H1 (cell line): ENCODE measurements at regions of chr6 and their contacts with region 1.

Region 1: DNA sequence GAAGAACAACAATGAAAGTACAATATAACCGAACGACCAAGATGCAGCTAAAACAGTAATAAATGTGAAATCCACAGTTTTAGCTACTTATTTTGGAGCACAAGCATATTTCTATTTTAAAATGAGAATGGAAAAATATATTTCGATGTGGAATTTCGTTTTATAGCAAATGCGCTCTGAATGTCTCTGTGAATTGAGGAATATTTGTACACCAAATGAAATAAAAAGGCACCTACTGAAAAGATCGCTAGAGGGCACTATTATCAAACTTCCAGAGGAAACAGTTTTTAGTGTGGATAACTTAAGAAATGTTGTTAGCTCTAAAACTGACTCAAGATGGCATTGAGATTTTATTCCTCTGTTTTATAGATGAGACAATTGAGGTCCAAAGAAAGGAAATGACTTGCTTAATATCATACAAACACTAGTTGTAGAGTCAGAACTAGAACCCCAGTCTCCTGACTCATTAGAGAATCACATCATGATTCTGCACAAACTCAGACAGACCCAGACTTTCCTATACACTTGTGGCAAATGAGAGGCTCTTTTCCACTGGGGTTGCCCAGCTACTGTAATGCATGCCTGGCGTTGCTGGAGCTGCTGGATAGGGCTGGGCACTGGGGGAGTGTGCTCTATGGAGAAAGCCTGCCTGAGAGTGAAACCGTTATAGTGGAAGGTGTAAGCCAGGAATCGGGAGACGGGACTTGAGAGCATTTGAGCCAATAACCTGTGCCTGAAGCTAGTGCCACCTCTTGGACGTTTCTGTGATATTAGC is 51.9 kb downstream of the GCLC start:
- DNase-seq: peak in 1 of 2 experiments; percentile 49
- H3K4me3 ChIP-seq: no peak overlapping the region
- H3K27ac ChIP-seq: no peak overlapping the region
- H3K4me1 ChIP-seq: no peaks in the 10 kb centered on the region
- H3K27me3 ChIP-seq: no peaks in the 10 kb centered on the region
- CTCF ChIP-seq: peak in 2 of 3 experiments; percentile 52; a peak in 2 of 4 replicates
- EP300 ChIP-seq: no peak
- POLR2A ChIP-seq: no peak
- RAD21 ChIP-seq: peak; percentile 71 to 75

Region 2: DNA sequence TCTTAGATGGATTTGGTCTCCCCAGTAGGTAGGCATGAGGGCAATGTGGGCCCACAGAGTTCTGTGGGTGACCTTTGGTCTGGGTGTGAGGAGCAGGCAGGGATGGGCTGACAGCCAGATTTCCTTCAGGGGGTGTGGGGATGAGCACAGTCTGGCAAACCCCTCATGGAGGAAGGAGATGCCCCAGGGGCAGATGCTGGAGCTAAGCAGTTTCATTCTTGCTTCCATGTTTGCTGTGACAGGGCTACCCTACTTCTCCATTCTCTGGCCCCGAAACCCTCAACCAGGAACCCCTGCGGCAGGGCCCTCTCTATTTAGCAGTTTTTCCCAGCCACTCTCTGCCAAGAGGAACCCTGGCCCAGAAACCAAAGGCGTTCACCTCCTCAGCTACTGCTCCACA is 11.5 kb after region 1 on chr6:
- CTCF ChIA-PET with region 1: interaction called, 16 read pairs
- POLR2A ChIA-PET with region 1: no interaction called
- DNase-seq: no peak
- H3K4me3 ChIP-seq: no peak overlapping the region
- H3K27ac ChIP-seq: no peak overlapping the region
- H3K4me1 ChIP-seq: no peaks in the 10 kb centered on the region
- H3K27me3 ChIP-seq: no peaks in the 10 kb centered on the region
- CTCF ChIP-seq: no peak
- EP300 ChIP-seq: no peak
- POLR2A ChIP-seq: no peak
- RAD21 ChIP-seq: no peak

Region 3: GRCh38 chr6:53530346-53530745 is 37.3 kb after region 1 on chr6:
- CTCF ChIA-PET with region 1: interaction called, 14 read pairs
- POLR2A ChIA-PET with region 1: no interaction called
- DNase-seq: no peak
- H3K4me3 ChIP-seq: no peak overlapping the region
- H3K27ac ChIP-seq: no peak overlapping the region
- H3K4me1 ChIP-seq: peaks cover 9 to 43% (median 30%) of the 10 kb centered on the region in 4 experiments
- H3K27me3 ChIP-seq: no peaks in the 10 kb centered on the region
- CTCF ChIP-seq: no peak
- EP300 ChIP-seq: no peak
- POLR2A ChIP-seq: no peak
- RAD21 ChIP-seq: no peak

Region 4: GRCh38 chr6:53662457-53662856 is 169.4 kb after region 1 on chr6:
- CTCF ChIA-PET with region 1: interaction called, 17 read pairs
- POLR2A ChIA-PET with region 1: no interaction called
- DNase-seq: no peak
- H3K4me3 ChIP-seq: no peak overlapping the region
- H3K27ac ChIP-seq: no peak overlapping the region
- H3K4me1 ChIP-seq: no peaks in the 10 kb centered on the region
- H3K27me3 ChIP-seq: no peaks in the 10 kb centered on the region
- CTCF ChIP-seq: no peak
- EP300 ChIP-seq: no peak
- POLR2A ChIP-seq: no peak
- RAD21 ChIP-seq: no peak

Region 5: GRCh38 chr6:53718597-53719460 is 225.8 kb after region 1 on chr6:
- CTCF ChIA-PET with region 1: interaction called, 23 read pairs
- POLR2A ChIA-PET with region 1: no interaction called
- DNase-seq: no peak
- H3K4me3 ChIP-seq: no peak overlapping the region
- H3K27ac ChIP-seq: no peak overlapping the region
- H3K4me1 ChIP-seq: no peaks in the 10 kb centered on the region
- H3K27me3 ChIP-seq: no peaks in the 10 kb centered on the region
- CTCF ChIP-seq: peak in 2 of 3 experiments; percentile 72 to 85; a peak in 3 of 4 replicates
- EP300 ChIP-seq: no peak
- POLR2A ChIP-seq: no peak
- RAD21 ChIP-seq: peak; percentile 66 to 69